Dorsolateral prefrontal cortex (tissue), 120 donors: ENCODE measurements at regions of chr17 and their contacts with region 1.

Region 1: GRCh38 chr17:60599620-60600489 is at the start of gene PPM1D:
- DNase-seq: peak; percentile 98 to 99 (median 98)
- H3K4me3 ChIP-seq: peak within 1 kb of the TSS; percentile 62 to 99 (median 93)
- H3K27ac ChIP-seq: peak within 1 kb of the TSS; percentile 96 to 100 (median 100)
- H3K27me3 ChIP-seq: no peaks in the 10 kb centered on the region
- CTCF ChIP-seq: peak in 26 of 56 donors; percentile 3 to 44 (median 18)
- total RNA-seq, gene PPM1D: 8.6 to 20.9 (median 13.7) TPM

Region 2: GRCh38 chr17:60442271-60443173 is 157.3 kb before region 1 on chr17:
- intact Hi-C with region 1: loop called in 1 of 2 experiments (anchors 1 kb)
- DNase-seq: no peak
- H3K4me3 ChIP-seq: peak overlapping the region in 27 of 59 donors; percentile 0 to 39 (median 10)
- H3K27ac ChIP-seq: peak overlapping the region; percentile 40 to 97 (median 87)
- H3K27me3 ChIP-seq: no peaks in the 10 kb centered on the region
- CTCF ChIP-seq: peak in 9 of 56 donors; percentile 9 to 31 (median 16)

Region 3: GRCh38 chr17:60525685-60526514 is 74.0 kb before region 1 on chr17 and contains the start of gene APPBP2:
- intact Hi-C with region 1: loop called (anchors 2 kb)
- DNase-seq: peak; percentile 78 to 92 (median 88)
- H3K4me3 ChIP-seq: peak within 1 kb of the TSS; percentile 70 to 99 (median 93)
- H3K27ac ChIP-seq: peak within 1 kb of the TSS; percentile 76 to 100 (median 99)
- H3K27me3 ChIP-seq: no peaks in the 10 kb centered on the region
- CTCF ChIP-seq: peak in 17 of 56 donors; percentile 5 to 48 (median 25)
- total RNA-seq, gene APPBP2: 44.7 to 85.8 (median 66.2) TPM

Region 4: DNA sequence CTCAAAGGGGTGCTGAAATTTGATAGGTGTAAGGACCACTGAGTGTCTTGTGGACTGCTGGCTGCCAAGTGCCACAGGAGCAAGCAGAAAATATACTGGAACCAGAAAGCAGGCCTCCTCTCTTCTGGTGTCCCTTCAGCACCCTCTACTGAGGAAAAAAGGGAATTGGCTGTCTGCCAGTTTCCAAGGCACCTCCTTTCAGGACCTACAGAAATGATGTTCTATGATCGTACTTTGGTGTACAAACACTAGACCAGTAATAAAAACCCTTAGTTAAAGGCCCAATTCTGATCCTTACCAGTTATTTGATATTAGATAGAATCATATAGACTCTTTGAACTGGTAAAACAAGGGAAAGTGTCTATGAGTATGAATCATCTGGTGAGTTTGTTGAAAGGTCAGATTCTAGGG is 42.0 kb after region 1 on chr17:
- intact Hi-C with region 1: loop called (anchors 2 to 5 kb)
- DNase-seq: peak in 8 of 10 donors; percentile 39 to 77 (median 56)
- H3K4me3 ChIP-seq: no peak overlapping the region
- H3K27ac ChIP-seq: peak overlapping the region in 51 of 59 donors; percentile 7 to 81 (median 53)
- H3K27me3 ChIP-seq: no peaks in the 10 kb centered on the region
- CTCF ChIP-seq: peak in 55 of 56 donors; percentile 24 to 84 (median 63)

Region 5: GRCh38 chr17:60665602-60666001 is 65.7 kb after region 1 on chr17:
- intact Hi-C with region 1: no loop called
- DNase-seq: no peak
- H3K4me3 ChIP-seq: no peak overlapping the region
- H3K27ac ChIP-seq: no peak overlapping the region
- H3K27me3 ChIP-seq: no peaks in the 10 kb centered on the region
- CTCF ChIP-seq: no peak

Region 6: DNA sequence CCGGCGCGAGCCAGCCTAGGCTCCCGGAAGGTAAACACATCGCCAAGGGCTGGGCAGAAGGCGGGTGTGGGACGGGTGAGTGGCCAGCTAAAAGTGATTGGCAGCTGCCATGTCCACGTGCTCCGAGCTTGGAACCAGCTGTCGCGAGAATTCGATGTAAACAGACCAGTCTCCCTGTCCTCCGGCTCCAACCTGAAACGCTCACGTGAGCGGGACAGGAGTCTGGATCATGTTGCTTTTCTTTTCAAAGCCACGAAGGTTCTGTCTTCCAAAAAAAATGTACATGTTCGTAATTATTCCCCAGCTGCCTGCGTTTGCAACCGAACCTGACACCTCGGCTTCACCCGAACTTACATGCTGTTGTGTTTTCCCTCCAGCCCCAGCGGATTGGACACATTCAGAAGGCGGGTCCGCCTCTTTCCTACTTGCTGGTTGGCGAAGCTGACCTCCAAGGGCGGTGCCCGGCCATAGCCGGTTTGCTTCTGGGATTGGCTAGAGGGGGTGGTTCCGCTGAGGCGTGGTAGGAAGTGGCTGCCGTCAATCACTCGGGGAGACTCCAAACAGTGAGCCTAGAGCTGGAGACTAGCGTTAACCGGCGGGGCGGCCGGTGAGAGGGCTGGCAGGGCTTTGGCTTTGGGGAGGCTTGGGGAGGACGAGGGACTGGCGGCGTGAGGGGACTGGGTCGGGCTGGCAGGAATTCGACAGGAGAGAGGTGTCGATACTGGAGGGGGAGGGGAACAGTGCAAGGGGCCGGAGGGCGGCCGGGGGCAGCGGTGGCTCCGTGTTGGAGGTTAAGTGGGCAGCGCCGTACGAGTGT is 77.7 kb after region 1 on chr17 and contains the start of gene BCAS3:
- intact Hi-C with region 1: loop called in 1 of 2 experiments (anchors 2 kb)
- DNase-seq: peak; percentile 97 to 99 (median 99)
- H3K4me3 ChIP-seq: peak within 1 kb of the TSS; percentile 62 to 98 (median 91)
- H3K27ac ChIP-seq: peak within 1 kb of the TSS; percentile 83 to 98 (median 95)
- H3K27me3 ChIP-seq: no peaks in the 10 kb centered on the region
- CTCF ChIP-seq: peak in 13 of 56 donors; percentile 2 to 40 (median 12)
- total RNA-seq, gene BCAS3: 51.5 to 99.8 (median 76.7) TPM

Region 7: DNA sequence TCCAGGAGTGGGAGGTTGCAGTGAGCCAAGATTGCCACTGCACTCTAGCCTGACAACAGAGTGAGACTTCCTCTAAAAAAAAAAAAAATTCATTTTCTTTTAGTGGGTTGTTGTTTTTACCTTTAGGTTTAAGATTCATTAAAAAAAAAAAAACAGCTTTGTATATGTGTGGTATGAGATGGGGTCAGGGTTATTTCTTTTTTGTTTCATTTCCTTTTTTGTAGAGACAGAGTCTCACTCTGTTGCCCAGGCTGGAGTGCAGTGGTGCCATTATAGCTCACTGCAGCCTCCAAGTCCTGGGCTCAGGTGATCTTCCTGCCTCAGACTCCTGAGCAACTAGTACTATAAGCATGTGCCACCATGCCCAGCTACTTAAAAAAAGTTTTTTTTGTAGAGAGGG is 124.8 kb after region 1 on chr17:
- intact Hi-C with region 1: no loop called
- DNase-seq: no peak
- H3K4me3 ChIP-seq: no peak overlapping the region
- H3K27ac ChIP-seq: no peak overlapping the region
- H3K27me3 ChIP-seq: no peaks in the 10 kb centered on the region
- CTCF ChIP-seq: no peak